Vagina (tissue), 2 donors: ENCODE measurements at regions of chr14 and their contacts with region 1.

Region 1: DNA sequence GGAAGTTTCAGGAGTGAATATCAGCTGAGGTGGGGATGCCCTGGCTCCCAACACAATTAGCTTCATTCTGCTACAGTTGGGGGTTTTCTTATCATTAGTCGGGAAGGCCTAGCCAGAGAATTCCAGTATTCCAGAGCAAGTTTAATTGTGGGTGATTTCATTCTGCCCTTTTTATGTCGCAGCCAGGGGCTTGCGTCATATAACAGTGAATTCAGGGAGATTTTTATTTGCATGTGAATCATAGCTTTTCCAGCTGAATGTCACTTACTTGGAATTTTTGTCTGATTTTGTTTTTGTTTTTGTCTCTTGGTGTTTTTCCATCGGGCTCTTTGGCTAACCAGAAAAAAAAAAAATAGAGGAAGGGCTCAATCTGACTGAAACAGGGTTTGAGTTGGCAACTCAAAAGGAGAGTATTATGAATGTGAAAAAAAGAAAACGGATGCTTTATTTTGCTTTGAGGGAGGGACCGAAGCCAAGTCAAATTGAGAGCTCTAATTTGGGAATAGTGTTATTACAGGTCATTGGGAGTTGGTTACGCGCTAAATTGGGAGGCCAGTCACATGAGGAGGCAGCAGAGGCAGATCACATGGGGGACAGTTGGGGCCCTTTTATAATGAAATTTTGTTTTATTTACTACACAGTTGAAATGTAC is 119.4 kb downstream of the SAMD4A start:
- DNase-seq: no peak
- H3K4me3 ChIP-seq: no peak overlapping the region
- H3K27ac ChIP-seq: peak overlapping the region; percentile 92
- H3K4me1 ChIP-seq: peaks cover 55% of the 10 kb centered on the region
- H3K27me3 ChIP-seq: no peaks in the 10 kb centered on the region
- CTCF ChIP-seq: no peak
- POLR2A ChIP-seq: no peak

Region 2: GRCh38 chr14:54566410-54567223 is 119.7 kb before region 1 on chr14 and contains the start of gene SAMD4A:
- intact Hi-C with region 1: loop called (anchors 2 kb)
- DNase-seq: peak in 1 of 2 donors; percentile 92
- H3K4me3 ChIP-seq: peak within 1 kb of the TSS; percentile 75 to 86
- H3K27ac ChIP-seq: peak within 1 kb of the TSS; percentile 99
- H3K4me1 ChIP-seq: peaks cover 39% of the 10 kb centered on the region
- H3K27me3 ChIP-seq: no peaks in the 10 kb centered on the region
- CTCF ChIP-seq: peak in 1 of 3 experiments; percentile 29
- POLR2A ChIP-seq: peak in 1 of 2 donors; percentile 58
- total RNA-seq, gene SAMD4A: 43.0 TPM

Region 3: DNA sequence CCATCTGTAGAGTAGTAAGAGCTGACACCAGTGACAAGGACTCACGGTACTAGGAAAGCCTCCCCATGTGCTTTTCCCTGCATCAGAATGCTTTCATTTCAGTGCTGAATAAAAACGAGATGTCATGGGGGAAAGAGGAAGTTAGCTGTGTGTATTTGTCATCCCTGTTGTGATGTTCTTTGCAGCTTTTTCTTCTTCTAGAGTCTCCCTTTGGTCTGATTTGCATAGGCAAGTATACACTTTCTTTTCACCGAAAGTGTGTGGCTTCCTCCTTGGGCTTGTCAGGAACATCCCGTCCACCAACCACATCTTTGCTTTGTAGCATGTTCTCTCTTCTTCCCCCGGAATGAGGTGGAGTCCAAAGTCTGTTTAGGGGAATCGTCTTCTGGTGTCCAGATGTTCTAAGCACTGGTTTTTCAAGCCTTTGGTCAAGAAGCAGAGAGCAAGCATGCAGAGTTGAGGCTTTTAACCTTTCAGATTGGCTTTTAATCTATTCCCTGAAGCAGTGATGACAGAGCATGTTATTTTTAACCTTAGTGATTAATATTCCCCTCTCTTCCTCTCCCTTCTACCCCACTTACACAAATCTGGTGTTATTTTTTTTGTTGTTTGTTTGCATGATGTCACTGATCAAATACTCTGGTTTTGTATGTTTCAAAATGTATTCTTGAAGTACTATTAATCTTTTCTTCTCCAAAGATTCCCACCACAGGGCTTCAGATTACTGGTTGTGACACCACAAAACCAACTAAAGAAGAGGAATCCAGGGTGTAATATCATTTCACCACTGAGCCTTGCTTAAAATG is 44.0 kb after region 1 on chr14:
- intact Hi-C with region 1: no loop called
- DNase-seq: no peak
- H3K4me3 ChIP-seq: peak overlapping the region in 1 of 2 donors; percentile 11
- H3K27ac ChIP-seq: peak overlapping the region; percentile 69
- H3K4me1 ChIP-seq: peaks cover 17% of the 10 kb centered on the region
- H3K27me3 ChIP-seq: no peaks in the 10 kb centered on the region
- CTCF ChIP-seq: no peak
- POLR2A ChIP-seq: no peak